MCF 10A (cell line): ENCODE measurements at regions of chr20 and their contacts with region 1.

Region 1: GRCh38 chr20:5205348-5206210 is 78.8 kb downstream of the CDS2 start:
- DNase-seq: peak; percentile 70
- H3K4me3 Mint-ChIP-seq: no peak overlapping the region
- H3K27ac Mint-ChIP-seq: no peak overlapping the region
- H3K4me1 Mint-ChIP-seq: no peaks in the 10 kb centered on the region
- H3K27me3 Mint-ChIP-seq: no peaks in the 10 kb centered on the region
- CTCF ChIP-seq: peak; percentile 88

Region 2: DNA sequence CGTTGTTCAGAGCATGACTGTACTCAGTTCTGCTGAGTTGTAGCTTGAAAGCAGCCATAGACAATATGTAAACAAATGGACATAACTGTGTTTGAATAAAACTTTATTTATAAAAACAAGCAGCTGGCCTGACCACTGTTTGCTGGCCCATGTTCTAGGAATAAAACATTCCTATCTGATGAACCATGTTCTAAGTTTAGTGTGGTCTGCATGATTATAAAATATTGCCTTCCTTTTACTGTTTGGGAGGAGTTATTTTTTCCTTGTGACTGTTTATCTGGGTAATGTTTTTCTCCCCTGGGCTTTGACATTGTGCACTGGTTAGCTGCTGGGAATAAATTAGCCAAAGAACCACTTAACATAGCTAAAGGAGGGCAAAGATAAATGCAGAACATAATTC is 23.6 kb before region 1 on chr20:
- CTCF ChIA-PET with region 1: interaction called, 18 read pairs
- POLR2A ChIA-PET with region 1: no interaction called
- intact Hi-C with region 1: no loop called
- DNase-seq: no peak
- H3K4me3 Mint-ChIP-seq: no peak overlapping the region
- H3K27ac Mint-ChIP-seq: no peak overlapping the region
- H3K4me1 Mint-ChIP-seq: no peaks in the 10 kb centered on the region
- H3K27me3 Mint-ChIP-seq: no peaks in the 10 kb centered on the region
- CTCF ChIP-seq: no peak

Region 3: DNA sequence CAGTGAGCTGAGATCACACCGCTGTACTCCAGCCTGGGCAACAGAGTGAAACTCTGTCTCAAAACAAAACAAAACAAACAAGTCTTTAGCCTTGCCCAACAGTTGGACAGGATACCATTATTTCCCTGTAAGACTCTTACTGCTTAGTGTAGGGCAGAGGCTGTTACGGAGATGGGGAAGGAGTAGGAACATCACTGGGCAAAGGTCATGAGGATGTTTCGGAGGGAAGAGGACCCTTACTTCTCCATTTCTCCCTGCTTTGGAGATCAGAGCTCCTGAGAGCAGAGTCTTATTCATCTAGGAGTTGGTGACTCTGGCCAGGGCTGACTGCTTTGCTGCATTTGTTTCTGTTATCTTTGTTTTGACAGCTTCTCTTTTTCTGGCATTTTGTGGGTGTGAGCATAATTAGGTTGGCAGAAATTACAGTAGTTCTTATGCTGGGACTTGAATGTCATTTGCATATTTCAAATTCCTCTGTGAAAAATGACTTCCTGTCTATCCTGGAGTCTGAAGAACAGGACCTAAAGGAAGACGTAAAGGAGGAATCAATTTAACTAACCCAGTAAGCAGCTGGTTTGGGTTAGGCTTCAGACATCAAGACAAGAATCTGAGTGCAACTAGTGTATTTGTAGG is 10.2 kb after region 1 on chr20:
- CTCF ChIA-PET with region 1: interaction called, 106 read pairs
- POLR2A ChIA-PET with region 1: no interaction called
- intact Hi-C with region 1: no loop called
- DNase-seq: no peak
- H3K4me3 Mint-ChIP-seq: no peak overlapping the region
- H3K27ac Mint-ChIP-seq: no peak overlapping the region
- H3K4me1 Mint-ChIP-seq: no peaks in the 10 kb centered on the region
- H3K27me3 Mint-ChIP-seq: peaks cover 21% of the 10 kb centered on the region
- CTCF ChIP-seq: no peak

Region 4: DNA sequence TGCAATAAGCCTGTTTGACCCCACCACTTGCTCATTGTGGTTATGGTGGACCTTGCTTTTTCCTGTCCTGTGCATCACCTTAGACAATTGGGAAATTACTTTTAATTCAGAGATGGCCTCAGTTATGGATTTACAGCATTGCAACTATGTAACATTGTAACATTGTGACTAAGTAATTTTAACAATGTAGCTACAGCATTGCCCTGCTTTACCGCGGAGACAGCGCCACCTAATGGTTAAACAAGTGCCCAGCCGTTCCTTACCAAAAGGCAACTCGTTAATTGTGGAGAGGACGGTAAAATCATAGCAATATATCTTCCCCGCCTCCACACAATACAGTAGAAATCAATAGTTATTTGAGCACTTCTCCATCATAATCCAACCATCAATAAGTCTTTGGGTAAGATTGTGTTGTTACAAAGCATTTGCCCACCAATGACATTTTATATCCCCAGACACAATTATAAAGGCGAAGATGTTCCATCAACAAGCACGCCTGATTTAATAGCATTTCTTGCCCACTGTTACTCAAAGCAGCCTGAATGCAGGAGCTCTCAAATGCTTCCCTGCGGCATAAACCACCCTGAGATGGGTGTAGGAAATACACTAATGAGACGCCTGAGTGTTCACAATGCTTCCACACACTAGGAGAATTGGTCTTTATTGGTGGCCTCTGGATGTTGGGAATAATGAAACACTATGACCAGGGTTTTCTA is 17.5 kb after region 1 on chr20:
- CTCF ChIA-PET with region 1: interaction called, 106 read pairs
- POLR2A ChIA-PET with region 1: interaction called, 4 read pairs
- intact Hi-C with region 1: loop called (anchors 2 kb)
- DNase-seq: peak; percentile 66
- H3K4me3 Mint-ChIP-seq: no peak overlapping the region
- H3K27ac Mint-ChIP-seq: no peak overlapping the region
- H3K4me1 Mint-ChIP-seq: no peaks in the 10 kb centered on the region
- H3K27me3 Mint-ChIP-seq: peaks cover 51% of the 10 kb centered on the region
- CTCF ChIP-seq: peak; percentile 81

Region 5: GRCh38 chr20:5402903-5403531 is 197.4 kb after region 1 on chr20:
- CTCF ChIA-PET with region 1: interaction called, 6 read pairs
- POLR2A ChIA-PET with region 1: no interaction called
- intact Hi-C with region 1: loop called (anchors 1 kb)
- DNase-seq: peak; percentile 51
- H3K4me3 Mint-ChIP-seq: no peak overlapping the region
- H3K27ac Mint-ChIP-seq: no peak overlapping the region
- H3K4me1 Mint-ChIP-seq: no peaks in the 10 kb centered on the region
- H3K27me3 Mint-ChIP-seq: peaks cover 39% of the 10 kb centered on the region
- CTCF ChIP-seq: peak; percentile 45

Region 6: DNA sequence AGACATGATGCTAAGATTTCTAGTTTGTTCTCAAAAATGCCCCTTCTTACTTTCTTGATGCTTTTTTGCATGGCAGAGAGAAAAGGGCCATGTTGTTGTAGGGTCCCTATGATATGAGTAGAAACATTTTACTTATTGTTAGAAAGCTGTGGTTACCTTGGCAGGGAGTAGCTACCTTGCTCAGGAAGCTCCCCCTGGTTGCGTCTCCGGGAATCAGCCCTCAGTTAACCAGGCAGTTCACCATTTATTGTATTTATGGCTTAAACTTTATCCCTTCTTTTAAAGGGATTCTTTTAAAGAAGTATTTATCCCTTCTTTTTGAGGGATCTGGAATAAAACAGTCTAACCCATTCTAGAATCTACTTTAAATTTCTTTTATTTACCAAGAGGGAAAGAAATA is 225.1 kb after region 1 on chr20:
- CTCF ChIA-PET with region 1: interaction called, 16 read pairs
- POLR2A ChIA-PET with region 1: interaction called, 3 read pairs
- intact Hi-C with region 1: no loop called
- DNase-seq: peak; percentile 4
- H3K4me3 Mint-ChIP-seq: no peak overlapping the region
- H3K27ac Mint-ChIP-seq: no peak overlapping the region
- H3K4me1 Mint-ChIP-seq: no peaks in the 10 kb centered on the region
- H3K27me3 Mint-ChIP-seq: peaks cover 83% of the 10 kb centered on the region
- CTCF ChIP-seq: no peak